ENCODE measurements at regions of chr2 and their contacts with region 1.

Region 1: GRCh38 chr2:85678794-85679672 is 11.0 kb upstream of the SFTPB start:
- DNase-seq: peak; percentile 69
- H3K4me3 Mint-ChIP-seq: no peak overlapping the region
- H3K27ac Mint-ChIP-seq: no peak overlapping the region
- H3K4me1 Mint-ChIP-seq: peaks cover 23% of the 10 kb centered on the region
- H3K27me3 Mint-ChIP-seq: peaks cover 3% of the 10 kb centered on the region

Region 2: GRCh38 chr2:85695691-85696668 is 16.9 kb after region 1 on chr2:
- intact Hi-C with region 1: loop called (anchors 1 kb)
- DNase-seq: no peak
- H3K4me3 Mint-ChIP-seq: peak overlapping the region; percentile 9
- H3K27ac Mint-ChIP-seq: peak overlapping the region; percentile 48
- H3K4me1 Mint-ChIP-seq: peaks cover 19% of the 10 kb centered on the region
- H3K27me3 Mint-ChIP-seq: peaks cover 2% of the 10 kb centered on the region

Region 3: GRCh38 chr2:85707304-85707703 is 28.3 kb after region 1 on chr2:
- intact Hi-C with region 1: loop called (anchors 1 kb)
- DNase-seq: peak; percentile 76
- H3K4me3 Mint-ChIP-seq: peak overlapping the region; percentile 50
- H3K27ac Mint-ChIP-seq: peak overlapping the region; percentile 94
- H3K4me1 Mint-ChIP-seq: peaks cover 79% of the 10 kb centered on the region
- H3K27me3 Mint-ChIP-seq: no peaks in the 10 kb centered on the region

Region 4: DNA sequence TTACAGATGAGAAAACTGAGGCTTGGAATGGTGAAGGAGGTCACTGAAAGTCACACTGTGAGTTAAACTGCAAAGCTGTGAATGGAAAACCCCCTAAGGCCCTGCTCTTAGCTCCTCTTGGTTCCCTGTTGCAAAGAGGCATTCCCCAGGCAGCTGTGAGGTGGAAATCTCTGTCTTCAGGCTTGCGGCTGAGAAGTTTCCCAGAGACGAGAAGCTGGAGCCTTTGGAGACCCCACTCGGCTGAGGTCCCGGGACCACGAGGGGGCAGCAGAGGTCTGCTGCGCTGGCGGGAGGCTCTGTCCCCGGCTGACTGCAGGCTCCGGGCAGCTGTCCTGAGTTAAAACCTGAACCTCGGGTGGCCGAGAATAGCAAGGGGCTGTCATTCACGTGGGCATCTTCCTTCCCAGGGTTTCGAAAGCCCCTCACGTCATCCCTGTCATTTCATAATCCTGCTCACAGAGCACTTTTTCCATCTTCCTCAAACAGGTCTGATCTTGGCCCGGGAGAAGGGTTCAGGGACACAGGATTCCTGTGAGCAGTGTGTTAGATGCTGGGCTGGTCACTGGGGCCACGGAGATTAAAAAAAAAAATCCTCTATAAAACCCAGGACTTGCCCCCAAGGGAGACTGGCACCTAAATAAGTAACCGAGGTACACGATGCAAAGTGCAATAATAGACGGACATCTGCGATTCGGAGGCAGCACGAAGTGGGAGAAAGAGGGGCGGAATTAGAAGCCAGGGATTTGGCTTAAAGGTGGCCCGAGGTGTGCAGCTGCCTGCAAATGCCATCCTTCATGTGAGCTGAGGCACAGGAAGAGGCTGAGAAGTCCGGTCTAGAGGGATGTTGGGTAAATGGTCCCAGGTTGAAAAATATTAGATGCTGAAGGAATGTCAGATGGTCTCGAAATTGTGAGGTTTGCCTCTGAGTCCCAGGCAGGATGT is 50.1 kb after region 1 on chr2:
- intact Hi-C with region 1: loop called (anchors 1 kb)
- DNase-seq: peak; percentile 65
- H3K4me3 Mint-ChIP-seq: no peak overlapping the region
- H3K27ac Mint-ChIP-seq: no peak overlapping the region
- H3K4me1 Mint-ChIP-seq: peaks cover 13% of the 10 kb centered on the region
- H3K27me3 Mint-ChIP-seq: peaks cover 17% of the 10 kb centered on the region

Region 5: GRCh38 chr2:85750587-85751575 is 71.8 kb after region 1 on chr2:
- intact Hi-C with region 1: loop called (anchors 1 kb)
- DNase-seq: peak; percentile 47
- H3K4me3 Mint-ChIP-seq: no peak overlapping the region
- H3K27ac Mint-ChIP-seq: no peak overlapping the region
- H3K4me1 Mint-ChIP-seq: peaks cover 13% of the 10 kb centered on the region
- H3K27me3 Mint-ChIP-seq: peaks cover 52% of the 10 kb centered on the region

Region 6: DNA sequence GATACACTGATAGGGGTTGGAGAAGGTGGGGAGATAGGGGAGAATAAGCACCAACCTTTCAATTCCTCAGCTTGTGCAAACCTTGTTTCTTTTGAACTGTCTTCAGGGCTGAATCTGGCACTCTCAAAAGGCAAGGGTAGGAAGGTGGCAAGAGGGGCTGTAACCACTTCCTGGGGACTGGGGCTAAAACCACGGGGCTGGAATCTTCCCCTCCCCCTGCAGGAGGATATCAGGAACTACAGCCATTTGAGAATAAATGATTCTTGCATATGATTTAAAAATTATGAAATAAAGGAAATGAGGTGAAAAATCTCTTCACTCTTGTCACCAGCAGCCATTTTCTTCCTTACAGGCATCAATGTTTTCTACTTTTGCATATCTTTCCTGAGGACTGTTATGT is 125.5 kb after region 1 on chr2:
- intact Hi-C with region 1: loop called (anchors 2 kb)
- DNase-seq: peak; percentile 10
- H3K4me3 Mint-ChIP-seq: no peak overlapping the region
- H3K27ac Mint-ChIP-seq: no peak overlapping the region
- H3K4me1 Mint-ChIP-seq: peaks cover 13% of the 10 kb centered on the region
- H3K27me3 Mint-ChIP-seq: peaks cover 15% of the 10 kb centered on the region

Region 7: GRCh38 chr2:85813982-85814801 is 135.2 kb after region 1 on chr2:
- intact Hi-C with region 1: loop called (anchors 1 kb)
- DNase-seq: peak; percentile 74
- H3K4me3 Mint-ChIP-seq: no peak overlapping the region
- H3K27ac Mint-ChIP-seq: no peak overlapping the region
- H3K4me1 Mint-ChIP-seq: peaks cover 8% of the 10 kb centered on the region
- H3K27me3 Mint-ChIP-seq: peaks cover 35% of the 10 kb centered on the region